IMR-90 (cell line): ENCODE measurements at regions of chr13 and their contacts with region 1.

Region 1: DNA sequence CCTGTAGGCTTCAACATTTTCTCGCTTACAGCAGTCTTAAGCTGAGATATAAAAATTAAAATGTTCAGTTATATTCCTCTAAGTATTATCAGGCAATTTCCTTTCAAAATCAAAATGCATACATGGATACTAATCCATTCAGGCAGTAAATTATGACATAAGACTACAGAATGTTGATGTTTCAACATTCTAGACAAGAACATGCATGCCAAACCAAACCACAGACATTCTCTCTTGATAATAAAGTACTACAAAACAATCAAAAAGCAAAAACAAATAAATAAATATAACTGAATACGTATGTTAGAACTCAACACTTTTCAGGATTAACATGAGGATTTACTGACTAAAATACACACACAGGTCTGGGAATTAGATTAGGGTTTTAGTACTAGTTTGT is 7.7 kb downstream of the DIS3 start:
- DNase-seq: no peak
- ATAC-seq: no peak; the same call in 1 of the 2 replicates
- H3K4me3 ChIP-seq: no peak overlapping the region
- H3K27ac ChIP-seq: no peak overlapping the region
- H3K4me1 ChIP-seq: no peaks in the 10 kb centered on the region
- H3K27me3 ChIP-seq: no peaks in the 10 kb centered on the region
- CTCF ChIP-seq: no peak
- POLR2A ChIP-seq: no peak
- RAD21 ChIP-seq: no peak

Region 2: DNA sequence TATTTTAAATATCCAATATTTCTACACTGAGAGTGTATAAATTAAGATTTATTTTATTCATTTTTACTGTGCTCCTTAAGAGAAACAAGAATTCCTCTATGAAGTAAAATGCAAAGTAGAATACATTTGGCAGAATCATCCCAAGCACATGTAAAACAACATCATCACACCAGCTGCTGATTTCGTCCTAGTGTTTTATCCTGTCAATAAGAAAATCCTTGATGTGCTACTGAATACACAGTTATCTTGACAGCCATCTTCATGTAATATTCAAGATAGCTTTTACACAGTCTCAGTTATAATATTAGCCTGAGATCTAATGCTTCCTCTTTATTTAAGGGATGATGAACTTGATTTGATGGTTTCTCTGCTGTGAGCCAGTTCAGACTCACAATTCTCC is 329.0 kb before region 1 on chr13:
- CTCF ChIA-PET with region 1: no interaction called
- POLR2A ChIA-PET with region 1: no interaction called
- dilution Hi-C with region 1: no loop called
- in situ Hi-C with region 1: no loop called
- intact Hi-C with region 1: no loop called
- DNase-seq: no peak
- ATAC-seq: no peak
- H3K4me3 ChIP-seq: no peak overlapping the region
- H3K27ac ChIP-seq: no peak overlapping the region
- H3K4me1 ChIP-seq: no peaks in the 10 kb centered on the region
- H3K27me3 ChIP-seq: no peaks in the 10 kb centered on the region
- CTCF ChIP-seq: no peak
- POLR2A ChIP-seq: no peak
- RAD21 ChIP-seq: no peak

Region 3: DNA sequence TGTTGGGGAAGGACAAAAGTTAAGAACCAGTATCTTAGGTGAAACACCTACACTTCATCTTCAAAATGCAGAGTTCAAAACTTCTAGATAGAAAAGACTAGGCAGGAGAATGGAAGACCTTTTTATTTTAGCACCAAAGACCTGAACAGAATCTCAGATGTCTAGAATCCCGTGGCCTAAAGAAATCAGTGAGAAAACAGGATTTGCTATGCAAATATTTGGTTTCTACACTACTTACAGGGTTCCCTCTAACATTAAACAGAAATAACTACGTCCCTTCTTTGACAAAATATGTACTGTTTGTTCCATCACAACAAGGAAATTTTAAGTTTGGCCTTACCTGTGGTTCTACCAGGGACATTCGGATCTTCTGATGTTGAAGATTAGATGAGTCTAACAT is 13.8 kb before region 1 on chr13:
- CTCF ChIA-PET with region 1: no interaction called
- POLR2A ChIA-PET with region 1: no interaction called
- dilution Hi-C with region 1: no loop called
- in situ Hi-C with region 1: no loop called
- intact Hi-C with region 1: loop called (anchors 2 kb)
- DNase-seq: no peak
- ATAC-seq: no peak
- H3K4me3 ChIP-seq: no peak overlapping the region
- H3K27ac ChIP-seq: no peak overlapping the region
- H3K4me1 ChIP-seq: no peaks in the 10 kb centered on the region
- H3K27me3 ChIP-seq: no peaks in the 10 kb centered on the region
- CTCF ChIP-seq: no peak
- POLR2A ChIP-seq: no peak
- RAD21 ChIP-seq: no peak

Region 4: GRCh38 chr13:73223372-73223781 is 449.4 kb after region 1 on chr13:
- CTCF ChIA-PET with region 1: no interaction called
- POLR2A ChIA-PET with region 1: no interaction called
- dilution Hi-C with region 1: no loop called
- in situ Hi-C with region 1: no loop called
- intact Hi-C with region 1: no loop called
- DNase-seq: no peak
- ATAC-seq: no peak
- H3K4me3 ChIP-seq: no peak overlapping the region
- H3K27ac ChIP-seq: no peak overlapping the region
- H3K4me1 ChIP-seq: no peaks in the 10 kb centered on the region; the same call in 1 of the 2 replicates
- H3K27me3 ChIP-seq: no peaks in the 10 kb centered on the region
- CTCF ChIP-seq: no peak
- POLR2A ChIP-seq: no peak
- RAD21 ChIP-seq: no peak